ENCODE measurements at regions of chr11 and their contacts with region 1.

Region 1: DNA sequence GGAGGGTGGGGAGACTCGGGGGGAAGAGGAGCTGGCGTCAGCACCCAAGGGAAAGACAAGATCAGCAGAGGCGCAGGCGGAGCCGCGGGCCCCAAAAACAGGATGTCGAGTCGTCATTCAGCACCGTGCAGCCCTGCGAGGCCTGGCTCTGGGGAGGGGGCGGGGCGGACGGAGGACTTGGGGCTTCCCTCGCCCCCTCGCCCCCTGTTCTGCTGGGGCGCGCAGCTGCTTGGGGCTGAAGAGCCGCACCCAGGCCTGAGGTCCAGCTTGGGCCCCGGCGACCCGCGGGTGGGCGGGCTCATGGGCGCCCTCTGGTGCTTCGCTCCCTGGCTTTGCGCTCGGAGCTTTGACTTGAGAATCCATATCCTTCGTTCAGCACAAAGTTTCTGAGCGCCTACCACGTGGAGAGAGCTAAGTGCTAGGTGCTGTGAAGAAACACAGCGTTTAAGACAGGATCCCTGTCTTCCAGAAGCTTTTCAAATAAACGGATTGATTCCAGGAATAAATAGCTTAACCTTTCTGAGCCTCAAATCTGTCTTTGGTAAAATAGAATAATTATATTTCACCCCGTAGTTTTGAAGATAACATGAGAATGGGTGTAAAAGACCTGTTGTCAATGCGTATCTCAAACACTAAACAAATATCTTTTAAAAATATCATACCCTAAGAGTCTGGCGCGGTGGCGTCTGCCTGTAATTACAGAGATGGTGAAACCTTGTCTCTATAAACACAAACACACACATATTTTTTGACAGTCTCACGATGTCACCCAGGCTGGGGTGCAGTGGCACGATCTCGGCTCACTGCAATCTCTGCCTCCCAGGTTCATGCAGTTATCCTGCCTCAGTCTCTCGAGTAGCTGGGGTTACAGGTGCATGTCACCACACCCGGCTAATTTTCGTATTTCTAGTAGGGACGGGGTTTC is 929 bp upstream of the RHOG start:
- DNase-seq: peak; percentile 98
- H3K4me3 Mint-ChIP-seq: peak overlapping the region; percentile 85
- H3K27ac Mint-ChIP-seq: peak overlapping the region; percentile 86
- H3K4me1 Mint-ChIP-seq: peaks cover 50% of the 10 kb centered on the region
- H3K27me3 Mint-ChIP-seq: no peaks in the 10 kb centered on the region

Region 2: GRCh38 chr11:3753110-3753509 is 88.6 kb before region 1 on chr11:
- CTCF ChIA-PET with region 1: no interaction called
- intact Hi-C with region 1: no loop called
- DNase-seq: no peak
- H3K4me3 Mint-ChIP-seq: no peak overlapping the region
- H3K27ac Mint-ChIP-seq: peak overlapping the region; percentile 30
- H3K4me1 Mint-ChIP-seq: peaks cover under 1% of the 10 kb centered on the region
- H3K27me3 Mint-ChIP-seq: no peaks in the 10 kb centered on the region

Region 3: DNA sequence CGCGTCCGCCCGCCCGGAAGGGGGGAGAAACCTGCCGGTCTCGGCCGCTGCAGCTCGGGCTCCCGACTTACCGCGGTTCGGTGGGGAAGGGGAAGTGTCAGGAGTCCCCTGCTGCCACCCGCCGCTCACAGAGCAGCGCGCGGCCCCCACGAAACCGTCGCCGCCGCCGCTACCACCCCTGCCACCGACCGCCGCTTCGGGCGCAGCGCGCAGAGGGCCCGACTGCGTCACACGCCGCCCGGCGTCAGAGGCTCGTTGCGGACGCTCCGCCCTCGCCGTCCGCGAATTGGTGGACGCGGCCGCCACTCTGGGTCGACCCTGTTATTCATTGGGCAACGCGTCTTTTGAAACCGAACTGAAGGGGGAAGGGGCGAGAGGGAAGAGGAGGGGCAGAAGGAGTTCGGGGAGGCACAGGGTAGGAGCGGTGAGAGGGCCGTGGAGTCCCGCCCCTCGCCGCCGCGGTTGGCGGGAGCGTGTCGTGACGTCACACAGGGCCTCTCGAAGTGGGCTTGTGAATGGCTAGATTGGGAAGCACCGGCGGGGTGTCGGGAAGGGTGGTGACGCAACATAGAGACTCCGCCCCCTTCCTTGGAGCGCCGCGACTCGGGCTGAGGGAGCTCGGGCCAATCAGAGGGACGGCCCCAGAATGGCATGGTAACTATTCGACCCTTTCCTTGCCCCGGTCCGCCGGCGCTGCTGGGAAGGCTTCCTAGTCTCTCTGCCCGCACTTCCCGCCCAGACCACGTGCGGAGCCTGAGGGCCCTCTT is 44.2 kb before region 1 on chr11 and contains the start of gene NUP98:
- CTCF ChIA-PET with region 1: interaction called, 4 read pairs
- intact Hi-C with region 1: loop called (anchors 1 kb)
- DNase-seq: peak; percentile 100
- H3K4me3 Mint-ChIP-seq: peak within 1 kb of the TSS; percentile 98
- H3K27ac Mint-ChIP-seq: peak within 1 kb of the TSS; percentile 98
- H3K4me1 Mint-ChIP-seq: peaks cover 54% of the 10 kb centered on the region
- H3K27me3 Mint-ChIP-seq: no peaks in the 10 kb centered on the region
- total RNA-seq, gene NUP98: 90.8 to 97.6 TPM

Region 4: GRCh38 chr11:3831378-3832239 is 10.1 kb before region 1 on chr11:
- CTCF ChIA-PET with region 1: interaction called, 12 read pairs
- intact Hi-C with region 1: loop called (anchors 1 kb)
- DNase-seq: no peak
- H3K4me3 Mint-ChIP-seq: peak overlapping the region; percentile 0
- H3K27ac Mint-ChIP-seq: peak overlapping the region; percentile 86
- H3K4me1 Mint-ChIP-seq: peaks cover 70% of the 10 kb centered on the region
- H3K27me3 Mint-ChIP-seq: no peaks in the 10 kb centered on the region

Region 5: DNA sequence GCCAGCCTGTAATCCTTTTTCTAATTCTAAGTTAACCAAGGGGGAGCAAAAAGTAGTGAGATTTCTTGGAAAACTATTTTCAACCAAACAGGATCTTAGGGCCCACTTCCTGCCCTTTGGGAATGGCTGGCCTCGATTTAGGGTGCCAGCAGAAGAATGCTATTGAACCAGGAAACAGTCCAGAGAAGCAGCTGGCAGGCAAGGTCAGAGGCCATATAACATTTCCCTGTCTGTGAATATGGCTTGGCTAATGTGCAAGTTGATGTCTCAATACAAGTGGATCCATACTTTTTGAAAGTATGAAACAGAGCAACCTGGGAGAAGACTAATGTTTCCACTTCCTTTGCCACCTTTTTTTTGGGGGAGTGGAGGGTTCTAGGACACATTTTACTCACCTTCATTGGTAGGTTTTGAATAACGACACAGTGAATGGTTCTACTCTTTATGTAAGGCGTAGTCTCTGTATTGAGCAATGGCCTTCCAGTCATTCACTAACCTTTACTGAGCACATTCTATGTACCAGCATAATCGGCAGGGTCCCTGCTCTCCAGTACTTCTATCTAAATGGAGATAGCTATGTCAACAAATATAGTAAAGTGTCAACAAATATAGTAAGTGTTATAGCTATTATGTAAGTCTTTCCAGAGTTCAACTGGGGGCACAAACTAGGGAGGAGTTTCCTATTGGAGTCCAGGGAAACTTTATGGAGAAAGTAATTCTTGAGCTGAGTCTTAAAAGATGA is 218.7 kb after region 1 on chr11:
- CTCF ChIA-PET with region 1: interaction called, 573 read pairs
- intact Hi-C with region 1: loop called (anchors 1 kb)
- DNase-seq: no peak
- H3K4me3 Mint-ChIP-seq: no peak overlapping the region
- H3K27ac Mint-ChIP-seq: no peak overlapping the region
- H3K4me1 Mint-ChIP-seq: peaks cover 42% of the 10 kb centered on the region
- H3K27me3 Mint-ChIP-seq: no peaks in the 10 kb centered on the region

Region 6: GRCh38 chr11:4607781-4608666 is 766.3 kb after region 1 on chr11 and contains the start of gene TRIM68:
- CTCF ChIA-PET with region 1: no interaction called
- intact Hi-C with region 1: loop called (anchors 5 kb)
- DNase-seq: peak; percentile 97
- H3K4me3 Mint-ChIP-seq: peak within 1 kb of the TSS; percentile 94
- H3K27ac Mint-ChIP-seq: peak within 1 kb of the TSS; percentile 88
- H3K4me1 Mint-ChIP-seq: peaks cover 45% of the 10 kb centered on the region
- H3K27me3 Mint-ChIP-seq: no peaks in the 10 kb centered on the region
- total RNA-seq, gene TRIM68: 11.3 to 15.4 TPM